Mammary epithelial cell (primary cell): ENCODE measurements at regions of chr15 and their contacts with region 1.

Region 1: GRCh38 chr15:34587717-34588674 is 4.5 kb upstream of the GOLGA8B start:
- DNase-seq: peak; percentile 78
- H3K4me3 ChIP-seq: peak overlapping the region; percentile 5 to 60 (median 29)
- H3K27ac ChIP-seq: peak overlapping the region; percentile 22
- H3K4me1 ChIP-seq: peaks cover 8% of the 10 kb centered on the region
- H3K27me3 ChIP-seq: no peaks in the 10 kb centered on the region
- CTCF ChIP-seq: peak; percentile 71 to 75

Region 2: DNA sequence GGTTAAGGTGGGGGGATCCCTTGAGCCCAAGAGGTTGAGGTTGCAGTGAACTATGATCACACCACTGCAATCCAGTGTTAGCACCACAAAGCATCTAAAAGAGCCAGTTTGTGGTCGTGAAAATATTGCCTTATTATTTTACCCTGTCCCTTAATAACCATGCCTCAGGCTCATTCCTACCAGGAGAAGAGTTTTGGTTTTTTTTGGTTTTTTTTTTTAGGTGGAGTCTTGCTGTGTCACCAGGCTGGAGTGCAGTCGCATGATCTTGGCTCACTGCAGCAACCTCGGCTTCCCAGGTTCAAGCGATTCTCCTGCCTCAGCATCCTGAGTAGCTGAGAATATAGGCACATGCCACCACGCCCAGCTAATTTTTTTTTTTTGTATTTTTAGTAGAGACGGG is 531.1 kb before region 1 on chr15:
- CTCF ChIA-PET with region 1: no interaction called
- dilution Hi-C with region 1: no loop called
- in situ Hi-C with region 1: no loop called
- intact Hi-C with region 1: loop called (anchors 1 kb)
- DNase-seq: no peak
- H3K4me3 ChIP-seq: no peak overlapping the region
- H3K27ac ChIP-seq: no peak overlapping the region
- H3K4me1 ChIP-seq: peaks cover 9% of the 10 kb centered on the region
- H3K27me3 ChIP-seq: no peaks in the 10 kb centered on the region
- CTCF ChIP-seq: no peak

Region 3: DNA sequence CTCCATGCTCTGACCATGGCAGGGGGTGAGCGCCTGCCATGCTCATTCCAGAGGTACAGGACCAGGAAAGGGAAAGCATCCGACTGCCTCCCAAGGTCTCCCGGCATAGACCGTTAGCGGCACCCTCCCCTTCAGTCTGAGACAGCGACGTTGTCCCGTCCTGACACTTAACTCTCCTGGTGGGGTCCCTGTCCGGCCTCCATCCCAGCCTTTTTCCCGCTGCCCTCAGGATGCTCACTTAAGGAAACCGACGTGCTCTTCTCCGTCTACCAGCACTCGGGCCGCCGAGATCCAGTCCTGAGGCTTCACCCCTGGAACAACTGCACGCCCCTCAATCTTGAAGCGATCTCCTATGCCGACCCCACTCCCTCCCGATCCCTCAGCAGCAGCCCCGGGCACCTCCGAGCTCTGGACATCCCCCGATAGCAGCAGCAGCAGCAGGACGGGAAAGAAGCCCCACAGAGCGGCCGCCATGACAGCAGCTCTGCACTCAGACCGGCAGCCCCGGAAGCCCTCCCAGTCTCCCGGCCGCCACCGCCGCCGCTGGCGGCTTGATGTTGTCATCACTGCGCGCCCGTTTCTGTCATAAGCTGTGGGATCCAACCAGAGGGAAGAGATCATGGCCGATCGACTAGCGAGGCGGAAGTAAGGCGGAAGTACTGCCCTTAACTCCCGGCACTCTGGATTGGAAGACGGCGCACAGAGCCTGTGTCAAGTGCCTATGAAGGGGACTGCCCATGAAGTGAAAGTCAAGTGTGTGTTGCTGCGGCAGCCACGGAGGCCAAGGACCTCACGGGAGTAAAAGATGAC is 486.4 kb before region 1 on chr15 and contains the starts of genes EMC7 and PGBD4:
- CTCF ChIA-PET with region 1: no interaction called
- dilution Hi-C with region 1: no loop called
- in situ Hi-C with region 1: loop called (anchors 25 kb)
- intact Hi-C with region 1: no loop called
- DNase-seq: peak; percentile 99
- H3K4me3 ChIP-seq: peak within 1 kb of the TSS; percentile 96 to 99 (median 96)
- H3K27ac ChIP-seq: peak within 1 kb of the TSS; percentile 74
- H3K4me1 ChIP-seq: peaks cover 14% of the 10 kb centered on the region
- H3K27me3 ChIP-seq: no peaks in the 10 kb centered on the region
- CTCF ChIP-seq: no peak
- total RNA-seq, gene EMC7: 28.3 to 75.8 TPM
- total RNA-seq, gene PGBD4: 1.3 to 2.1 TPM

Region 4: DNA sequence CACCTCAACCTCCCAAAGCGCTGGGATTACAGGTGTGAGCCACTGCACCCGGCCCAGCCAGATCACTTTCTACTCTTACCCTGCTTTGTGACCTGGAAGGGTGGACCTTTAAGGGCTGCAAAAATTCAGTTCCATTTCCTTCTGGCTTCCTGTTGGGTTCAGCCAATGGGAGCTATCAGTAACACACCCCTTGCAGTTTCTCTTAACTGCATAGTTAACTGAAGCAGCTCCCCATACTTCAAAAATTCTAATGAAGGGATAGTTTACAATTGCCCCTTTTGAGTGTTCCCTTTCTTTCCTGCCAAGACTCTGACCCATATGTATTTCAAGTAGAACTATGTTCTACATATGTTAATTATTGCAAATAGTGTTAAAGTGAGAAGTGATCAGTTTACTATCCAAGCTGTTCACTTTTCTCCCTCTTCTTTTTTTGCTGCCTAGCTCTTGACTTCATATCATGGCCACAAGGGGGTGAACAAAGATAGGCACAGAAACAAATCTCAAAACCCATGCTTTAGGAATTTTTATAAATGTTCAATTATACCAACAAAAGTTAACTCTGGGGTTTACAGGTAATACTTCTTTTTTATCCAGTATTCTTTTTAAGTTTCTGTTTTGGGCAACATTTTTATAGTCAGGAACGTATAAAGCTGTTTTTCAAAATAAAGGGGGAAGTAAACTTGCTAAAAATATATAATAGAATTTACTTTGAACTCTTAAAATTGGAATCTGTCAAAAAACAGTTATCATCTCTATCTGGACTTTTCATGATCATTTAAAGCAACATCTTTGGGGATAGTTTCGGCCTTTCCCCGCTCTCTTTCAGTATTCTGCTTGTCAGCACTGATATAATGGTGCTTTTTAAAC is 478.0 kb before region 1 on chr15:
- CTCF ChIA-PET with region 1: no interaction called
- dilution Hi-C with region 1: no loop called
- in situ Hi-C with region 1: loop called (anchors 25 kb)
- intact Hi-C with region 1: loop called (anchors 1 kb)
- DNase-seq: peak; percentile 21
- H3K4me3 ChIP-seq: no peak overlapping the region
- H3K27ac ChIP-seq: no peak overlapping the region
- H3K4me1 ChIP-seq: no peaks in the 10 kb centered on the region
- H3K27me3 ChIP-seq: no peaks in the 10 kb centered on the region
- CTCF ChIP-seq: peak; percentile 58 to 77

Region 5: GRCh38 chr15:34342737-34343575 is 245.0 kb before region 1 on chr15 and contains the starts of genes NOP10 and NUTM1:
- CTCF ChIA-PET with region 1: no interaction called
- dilution Hi-C with region 1: no loop called
- in situ Hi-C with region 1: no loop called
- intact Hi-C with region 1: loop called (anchors 1 kb)
- DNase-seq: peak; percentile 87
- H3K4me3 ChIP-seq: peak within 1 kb of the TSS; percentile 91 to 95 (median 94)
- H3K27ac ChIP-seq: peak within 1 kb of the TSS; percentile 87
- H3K4me1 ChIP-seq: peaks cover 3% of the 10 kb centered on the region
- H3K27me3 ChIP-seq: no peaks in the 10 kb centered on the region
- CTCF ChIP-seq: peak; percentile 95 to 96
- total RNA-seq, gene NOP10: 187 to 239 TPM
- total RNA-seq, gene NUTM1: not detected

Region 6: GRCh38 chr15:34520566-34520965 is 67.4 kb before region 1 on chr15:
- CTCF ChIA-PET with region 1: no interaction called
- dilution Hi-C with region 1: no loop called
- in situ Hi-C with region 1: no loop called
- intact Hi-C with region 1: loop called (anchors 10 kb)
- DNase-seq: no peak
- H3K4me3 ChIP-seq: no peak overlapping the region
- H3K27ac ChIP-seq: no peak overlapping the region
- H3K4me1 ChIP-seq: no peaks in the 10 kb centered on the region
- H3K27me3 ChIP-seq: peaks cover 2% of the 10 kb centered on the region
- CTCF ChIP-seq: no peak